Keratinocyte (primary cell): ENCODE measurements at regions of chr13 and their contacts with region 1.

Region 1: DNA sequence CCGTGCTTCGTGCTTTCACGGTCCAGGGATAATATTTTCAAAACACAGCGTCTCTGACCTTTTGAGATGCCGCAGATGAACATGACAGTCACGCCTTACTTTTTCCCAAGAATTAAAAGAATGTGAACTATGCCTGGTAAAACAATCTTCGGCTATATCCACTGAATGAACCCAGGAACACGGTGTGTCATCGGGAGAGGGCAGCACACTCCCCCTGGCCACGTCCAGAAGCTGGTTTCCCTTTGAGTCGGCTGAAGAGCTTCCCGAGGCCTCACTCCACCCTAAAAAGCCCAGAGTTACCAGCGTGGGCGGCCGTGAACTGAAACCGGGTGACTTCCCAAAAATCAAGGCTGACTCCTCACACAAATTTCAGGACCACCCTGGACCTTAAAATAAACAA is 22.9 kb upstream of the SHISA2 start:
- DNase-seq: no peak
- H3K4me3 ChIP-seq: no peak overlapping the region
- H3K27ac ChIP-seq: no peak overlapping the region
- H3K4me1 ChIP-seq: peaks cover 2% of the 10 kb centered on the region
- H3K27me3 ChIP-seq: no peaks in the 10 kb centered on the region
- CTCF ChIP-seq: peak in 2 of 3 experiments; percentile 2 to 12

Region 2: GRCh38 chr13:25574437-25575411 is 500.0 kb before region 1 on chr13:
- dilution Hi-C with region 1: loop called (anchors 25 kb)
- DNase-seq: peak; percentile 50
- H3K4me3 ChIP-seq: no peak overlapping the region
- H3K27ac ChIP-seq: no peak overlapping the region
- H3K4me1 ChIP-seq: no peaks in the 10 kb centered on the region
- H3K27me3 ChIP-seq: peaks cover 11% of the 10 kb centered on the region
- CTCF ChIP-seq: peak; percentile 85 to 91 (median 86)

Region 3: DNA sequence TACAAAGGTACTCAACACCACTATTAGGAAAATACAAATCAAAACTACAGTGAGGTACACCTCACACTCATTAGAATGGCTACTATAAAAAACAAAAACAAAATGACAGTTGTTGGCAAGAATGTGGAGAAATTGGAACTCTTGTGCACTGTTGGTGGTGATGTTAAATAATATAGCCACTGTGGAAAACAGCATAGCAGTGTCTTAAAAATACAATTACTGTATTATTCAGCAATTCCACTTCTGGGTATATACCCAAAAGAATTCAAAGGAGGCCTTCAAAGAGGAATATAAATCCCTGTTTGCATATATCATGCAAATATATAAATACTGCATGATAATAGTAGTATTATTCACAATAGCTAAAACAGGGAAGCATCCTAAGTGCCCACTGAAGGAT is 246.1 kb after region 1 on chr13:
- dilution Hi-C with region 1: no loop called
- DNase-seq: no peak
- H3K4me3 ChIP-seq: no peak overlapping the region
- H3K27ac ChIP-seq: no peak overlapping the region
- H3K4me1 ChIP-seq: peaks cover 4% of the 10 kb centered on the region
- H3K27me3 ChIP-seq: no peaks in the 10 kb centered on the region
- CTCF ChIP-seq: no peak